ENCODE measurements at regions of chr22 and their contacts with region 1.

Region 1: DNA sequence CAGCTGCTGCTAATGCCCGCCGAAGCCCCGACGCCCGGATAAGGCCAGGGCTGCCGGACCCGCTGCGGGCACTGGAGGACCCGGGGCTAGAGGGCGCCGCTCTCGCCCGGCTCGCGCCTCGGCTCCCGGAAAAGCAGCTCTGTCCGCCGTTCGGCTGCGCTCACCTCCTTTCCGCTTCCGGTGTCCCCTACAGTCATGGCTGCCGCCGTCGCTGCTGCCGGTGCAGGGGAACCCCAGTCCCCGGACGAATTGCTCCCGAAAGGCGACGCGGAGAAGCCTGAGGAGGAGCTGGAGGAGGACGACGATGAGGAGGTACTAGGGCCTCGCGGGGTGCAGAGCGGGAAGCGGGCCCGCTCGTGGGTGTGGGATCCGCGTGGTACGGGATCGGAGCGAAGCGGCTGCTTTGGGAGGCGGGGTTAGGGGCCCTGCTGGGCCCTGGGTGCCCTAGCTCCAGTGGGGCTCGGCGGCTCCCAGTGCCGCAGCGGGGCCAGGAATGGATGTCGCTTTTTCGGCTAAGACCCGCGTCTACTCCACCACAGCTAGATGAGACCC is at the start of gene TOMM22:
- DNase-seq: peak; percentile 92
- H3K4me3 Mint-ChIP-seq: peak within 1 kb of the TSS; percentile 100
- H3K27ac Mint-ChIP-seq: peak within 1 kb of the TSS; percentile 96
- H3K4me1 Mint-ChIP-seq: no peaks in the 10 kb centered on the region
- H3K27me3 Mint-ChIP-seq: no peaks in the 10 kb centered on the region
- CTCF ChIP-seq: peak; percentile 30
- total RNA-seq, gene TOMM22: 94.6 and 105 TPM in 2 replicates

Region 2: DNA sequence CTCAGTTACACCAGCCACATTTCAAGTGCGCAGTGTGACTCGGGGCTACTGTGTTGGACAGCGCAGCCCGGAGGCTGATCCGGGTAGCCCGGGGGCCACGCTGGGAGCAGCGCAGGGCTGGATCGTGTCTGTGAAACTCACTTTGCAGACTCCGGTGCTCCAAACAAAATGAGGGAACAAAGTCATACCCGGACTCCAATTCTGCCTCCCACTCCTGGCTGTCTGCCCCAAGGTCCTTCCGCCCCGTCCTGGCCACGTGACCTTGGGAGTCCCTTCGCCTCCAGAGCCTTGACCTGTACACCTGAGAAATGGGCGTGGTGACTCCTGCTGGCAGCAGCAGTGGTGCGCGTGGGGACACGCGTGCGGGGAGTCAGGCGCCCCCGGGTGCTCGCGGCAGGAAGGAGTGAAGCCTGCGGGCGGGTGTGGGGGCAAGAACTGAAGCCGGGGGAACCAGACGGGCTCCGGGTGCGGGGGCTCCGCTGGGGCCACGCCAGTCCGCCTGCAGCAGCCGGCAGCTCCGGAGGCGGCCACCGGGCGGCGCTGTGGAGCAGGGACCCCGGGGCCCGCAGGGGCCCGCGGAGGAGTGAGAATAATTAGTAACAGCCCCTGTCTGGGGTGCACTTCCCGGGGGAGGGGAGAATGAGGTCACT is 269.3 kb before region 1 on chr22:
- CTCF ChIA-PET with region 1: no interaction called
- intact Hi-C with region 1: loop called (anchors 5 kb)
- DNase-seq: peak; percentile 46
- H3K4me3 Mint-ChIP-seq: peak overlapping the region; percentile 61
- H3K27ac Mint-ChIP-seq: no peak overlapping the region
- H3K4me1 Mint-ChIP-seq: no peaks in the 10 kb centered on the region
- H3K27me3 Mint-ChIP-seq: no peaks in the 10 kb centered on the region
- CTCF ChIP-seq: peak; percentile 97

Region 3: DNA sequence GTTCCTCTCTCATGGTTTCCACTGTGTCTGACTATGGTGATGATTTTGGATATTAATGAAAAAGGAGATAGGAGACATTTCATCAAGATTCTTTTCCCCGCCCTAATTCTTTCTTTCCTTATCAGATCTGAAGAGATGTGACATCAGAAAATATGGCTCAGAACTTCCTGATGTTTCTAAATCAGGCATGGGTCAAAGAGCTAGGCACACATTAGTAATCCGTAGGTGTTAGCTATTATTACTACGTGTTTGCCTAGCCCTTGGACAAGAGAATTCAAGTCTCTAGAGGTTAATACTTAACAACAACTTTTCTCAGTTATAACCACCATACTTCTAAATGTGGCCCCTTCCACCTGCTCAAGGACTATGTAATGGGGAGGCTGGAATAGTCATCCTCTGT is 13.1 kb after region 1 on chr22:
- CTCF ChIA-PET with region 1: interaction called, 17 read pairs
- intact Hi-C with region 1: loop called (anchors 2 kb)
- DNase-seq: no peak
- H3K4me3 Mint-ChIP-seq: peak overlapping the region; percentile 9
- H3K27ac Mint-ChIP-seq: peak overlapping the region; percentile 85
- H3K4me1 Mint-ChIP-seq: peaks cover 49% of the 10 kb centered on the region
- H3K27me3 Mint-ChIP-seq: no peaks in the 10 kb centered on the region
- CTCF ChIP-seq: no peak

Region 4: GRCh38 chr22:38733329-38733723 is 51.5 kb after region 1 on chr22:
- CTCF ChIA-PET with region 1: no interaction called
- intact Hi-C with region 1: no loop called
- DNase-seq: peak; percentile 61
- H3K4me3 Mint-ChIP-seq: no peak overlapping the region
- H3K27ac Mint-ChIP-seq: peak overlapping the region; percentile 45
- H3K4me1 Mint-ChIP-seq: no peaks in the 10 kb centered on the region
- H3K27me3 Mint-ChIP-seq: no peaks in the 10 kb centered on the region
- CTCF ChIP-seq: peak; percentile 90

Region 5: DNA sequence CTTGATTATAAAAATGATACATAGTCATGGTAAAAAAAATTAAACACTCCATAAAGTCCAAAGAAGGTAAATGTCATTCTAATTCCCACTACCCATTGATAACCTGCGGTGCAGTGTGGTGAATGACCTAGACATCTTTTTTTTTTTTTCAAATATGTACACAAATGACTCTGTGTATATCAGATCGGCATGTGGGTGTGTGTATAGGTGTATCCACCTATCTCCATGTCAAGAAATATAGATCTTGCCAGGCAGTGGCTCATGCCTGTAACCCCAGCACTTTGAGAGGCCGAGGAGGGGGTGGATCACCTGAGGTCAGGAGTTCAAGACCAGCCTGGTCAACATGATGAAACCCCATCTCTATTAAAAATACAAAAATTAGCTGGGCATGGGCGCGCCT is 208.5 kb after region 1 on chr22:
- CTCF ChIA-PET with region 1: no interaction called
- intact Hi-C with region 1: no loop called
- DNase-seq: no peak
- H3K4me3 Mint-ChIP-seq: no peak overlapping the region
- H3K27ac Mint-ChIP-seq: no peak overlapping the region
- H3K4me1 Mint-ChIP-seq: no peaks in the 10 kb centered on the region
- H3K27me3 Mint-ChIP-seq: no peaks in the 10 kb centered on the region
- CTCF ChIP-seq: no peak